Heart left ventricle (tissue), 16 donors: ENCODE measurements at regions of chr18 and their contacts with region 1.

Region 1: DNA sequence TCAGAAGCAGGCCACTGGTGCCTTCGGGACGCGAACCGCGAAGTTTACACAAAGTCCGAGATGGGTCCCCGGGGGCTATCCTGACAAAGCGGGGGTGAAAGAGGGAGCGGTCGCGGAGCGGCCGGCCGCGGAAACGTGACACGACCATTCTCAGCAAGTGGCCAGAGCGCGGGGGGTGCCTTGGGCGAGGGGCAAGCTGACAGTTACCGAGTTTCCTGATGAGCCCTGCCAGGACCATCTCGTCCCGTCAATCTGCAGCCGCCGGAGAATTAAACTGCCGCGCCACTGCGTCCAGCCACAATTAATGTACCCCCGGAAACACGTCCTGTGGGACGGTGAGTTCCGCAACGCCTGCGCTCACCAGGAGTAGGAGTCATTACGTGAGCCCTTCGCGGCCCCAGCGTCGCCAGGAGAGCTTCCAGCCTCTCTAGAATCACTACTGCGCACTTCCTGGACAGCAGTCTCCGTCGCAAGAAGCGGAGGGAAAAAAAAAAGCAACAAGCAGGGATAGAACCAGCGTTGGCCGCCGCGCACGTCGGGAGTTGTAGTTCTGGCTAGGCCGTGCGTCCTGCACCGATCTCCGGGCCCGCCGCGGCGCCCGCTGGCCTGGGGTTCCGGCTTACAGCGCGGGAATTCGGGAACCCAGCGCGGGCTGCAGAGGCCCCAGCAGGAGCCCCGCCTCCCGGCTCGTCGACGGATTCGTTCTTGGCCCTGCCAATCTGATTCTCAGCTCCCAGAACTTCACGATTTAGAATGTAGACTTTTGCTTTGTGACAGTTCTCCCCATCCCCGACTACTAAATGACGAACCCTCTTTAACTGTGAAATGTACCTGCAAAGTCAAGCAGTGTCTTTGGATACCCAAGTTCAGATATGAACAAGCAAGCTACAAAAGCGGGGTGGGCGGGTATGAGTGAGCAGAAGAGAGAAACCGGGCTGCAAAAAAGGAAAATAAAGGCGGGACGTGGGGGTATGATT is at the start of gene RTTN:
- DNase-seq: peak; percentile 94 to 97 (median 96)
- ATAC-seq: peak; percentile 99 to 100 (median 100)
- H3K4me3 ChIP-seq: peak within 1 kb of the TSS; percentile 46 to 92 (median 77)
- H3K27ac ChIP-seq: peak within 1 kb of the TSS; percentile 93 to 99 (median 97)
- H3K4me1 ChIP-seq: peaks cover 0 to 19% (median 11%) of the 10 kb centered on the region in 12 donors
- H3K27me3 ChIP-seq: no peaks in the 10 kb centered on the region
- CTCF ChIP-seq: peak in 1 of 12 donors; percentile 16
- POLR2A ChIP-seq: peak in 1 of 2 donors; percentile 17
- total RNA-seq, gene RTTN: 6.6 to 14.3 (median 8.8) TPM

Region 2: GRCh38 chr18:70036771-70037347 is 168.8 kb before region 1 on chr18:
- intact Hi-C with region 1: no loop called
- DNase-seq: no peak
- ATAC-seq: peak in 2 of 4 donors; percentile 24 to 41
- H3K4me3 ChIP-seq: no peak overlapping the region
- H3K27ac ChIP-seq: peak overlapping the region in 1 of 12 donors; percentile 49
- H3K4me1 ChIP-seq: peaks cover 0 to 9% (median 0%) of the 10 kb centered on the region in 12 donors
- H3K27me3 ChIP-seq: no peaks in the 10 kb centered on the region
- CTCF ChIP-seq: no peak
- POLR2A ChIP-seq: no peak

Region 3: GRCh38 chr18:70431203-70431624 is 225.5 kb after region 1 on chr18:
- intact Hi-C with region 1: loop called in 1 of 10 experiments (anchors 2 kb)
- DNase-seq: no peak
- ATAC-seq: no peak
- H3K4me3 ChIP-seq: no peak overlapping the region
- H3K27ac ChIP-seq: no peak overlapping the region
- H3K4me1 ChIP-seq: no peaks in the 10 kb centered on the region
- H3K27me3 ChIP-seq: no peaks in the 10 kb centered on the region
- CTCF ChIP-seq: no peak
- POLR2A ChIP-seq: no peak